ENCODE measurements at regions of chr11 and their contacts with region 1.

Region 1: DNA sequence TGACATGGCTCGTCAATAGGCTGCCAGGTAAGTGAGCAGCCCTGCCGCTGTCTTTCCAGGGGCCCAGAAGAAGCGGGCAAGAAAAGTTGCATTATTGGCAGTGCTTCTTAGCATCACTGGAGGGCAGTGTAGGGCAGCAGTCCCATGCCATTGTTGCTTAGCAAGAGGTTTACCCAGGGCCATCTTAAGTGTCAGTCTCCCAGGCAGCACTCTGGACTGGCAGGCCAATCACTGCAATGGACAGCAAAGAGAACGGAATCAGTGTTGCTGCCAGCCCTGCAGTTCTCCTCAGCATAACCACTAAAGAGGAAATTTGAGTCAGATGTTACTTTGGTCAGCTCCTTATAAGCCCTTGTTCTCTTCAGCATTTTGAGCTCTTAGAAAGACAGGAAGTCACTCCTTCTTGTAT is 13.4 kb upstream of the GRK2 start:
- DNase-seq: no peak

Region 2: GRCh38 chr11:67317205-67317887 is 64.5 kb after region 1 on chr11:
- in situ Hi-C with region 1: loop called (anchors 10 kb)
- DNase-seq: peak; percentile 97